Transverse colon (tissue), 4 donors: ENCODE measurements at regions of chr20 and their contacts with region 1.

Region 1: DNA sequence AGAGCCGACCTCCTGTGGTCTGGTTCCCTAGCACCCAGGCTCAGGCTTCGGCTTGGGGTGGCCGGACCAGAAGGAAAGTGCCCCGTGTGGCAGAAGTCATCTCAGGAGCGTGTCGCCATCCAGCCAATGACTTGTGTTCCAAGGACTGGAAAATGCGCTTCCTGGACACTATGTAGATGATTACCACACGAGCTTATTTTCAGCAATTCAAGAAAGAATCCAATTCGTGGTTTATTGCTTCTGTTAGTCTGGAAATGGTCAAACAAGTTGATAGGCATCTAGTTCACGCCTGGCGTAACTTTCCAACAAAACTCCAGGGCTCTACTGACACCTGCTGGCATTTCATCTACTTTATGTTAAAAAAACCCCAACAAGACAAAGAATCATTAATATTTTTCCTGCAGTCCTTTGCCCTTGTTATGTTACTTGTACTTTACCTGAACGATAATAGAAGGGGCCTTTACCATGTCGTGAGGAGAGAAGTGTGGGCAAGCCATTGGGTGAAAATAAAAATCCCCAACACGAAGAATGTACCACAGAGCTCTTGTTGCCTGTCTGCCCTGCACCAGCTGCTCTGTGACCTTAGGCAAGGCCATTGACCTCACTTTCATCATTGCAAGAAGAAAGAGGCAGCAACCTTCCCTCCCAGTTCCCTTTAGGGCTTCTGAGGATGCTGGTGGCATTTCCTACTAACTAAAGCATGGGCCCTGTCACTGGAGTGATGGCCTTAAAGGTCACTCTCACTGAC is 154.7 kb upstream of the LAMP5 start:
- DNase-seq: peak; percentile 55
- H3K4me3 ChIP-seq: no peak overlapping the region
- H3K27ac ChIP-seq: peak overlapping the region; percentile 29 to 48 (median 37)
- H3K4me1 ChIP-seq: peaks cover 0 to 12% (median 10%) of the 10 kb centered on the region in 4 donors
- H3K27me3 ChIP-seq: no peaks in the 10 kb centered on the region
- CTCF ChIP-seq: peak; percentile 44 to 68 (median 54)
- EP300 ChIP-seq: no peak
- POLR2A ChIP-seq: no peak

Region 2: DNA sequence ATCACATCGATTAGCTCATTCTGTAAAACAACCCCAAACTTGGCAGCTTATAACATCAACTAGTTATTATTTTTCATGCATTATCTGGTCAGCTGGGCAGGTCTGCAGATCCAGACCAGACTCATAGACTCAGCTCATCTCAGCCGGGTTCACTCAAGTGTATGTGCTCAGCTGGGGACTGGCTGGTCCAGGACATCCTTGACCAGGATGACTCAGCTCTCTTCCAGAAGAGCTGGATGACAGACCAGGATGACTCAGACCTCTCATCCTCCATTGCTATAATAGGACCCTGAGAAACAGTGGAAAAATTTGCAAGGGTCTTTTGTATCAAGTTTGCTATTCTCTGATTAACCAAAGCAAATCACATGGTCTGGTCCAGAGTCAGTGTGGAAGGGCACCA is 603.3 kb before region 1 on chr20:
- in situ Hi-C with region 1: loop called in 3 of 4 experiments (anchors 10 kb)
- intact Hi-C with region 1: no loop called
- DNase-seq: no peak
- H3K4me3 ChIP-seq: no peak overlapping the region
- H3K27ac ChIP-seq: peak overlapping the region in 2 of 4 donors; percentile 2 to 36
- H3K4me1 ChIP-seq: peaks cover 0 to 7% (median 0%) of the 10 kb centered on the region in 4 donors
- H3K27me3 ChIP-seq: no peaks in the 10 kb centered on the region
- CTCF ChIP-seq: no peak
- EP300 ChIP-seq: no peak
- POLR2A ChIP-seq: no peak

Region 3: DNA sequence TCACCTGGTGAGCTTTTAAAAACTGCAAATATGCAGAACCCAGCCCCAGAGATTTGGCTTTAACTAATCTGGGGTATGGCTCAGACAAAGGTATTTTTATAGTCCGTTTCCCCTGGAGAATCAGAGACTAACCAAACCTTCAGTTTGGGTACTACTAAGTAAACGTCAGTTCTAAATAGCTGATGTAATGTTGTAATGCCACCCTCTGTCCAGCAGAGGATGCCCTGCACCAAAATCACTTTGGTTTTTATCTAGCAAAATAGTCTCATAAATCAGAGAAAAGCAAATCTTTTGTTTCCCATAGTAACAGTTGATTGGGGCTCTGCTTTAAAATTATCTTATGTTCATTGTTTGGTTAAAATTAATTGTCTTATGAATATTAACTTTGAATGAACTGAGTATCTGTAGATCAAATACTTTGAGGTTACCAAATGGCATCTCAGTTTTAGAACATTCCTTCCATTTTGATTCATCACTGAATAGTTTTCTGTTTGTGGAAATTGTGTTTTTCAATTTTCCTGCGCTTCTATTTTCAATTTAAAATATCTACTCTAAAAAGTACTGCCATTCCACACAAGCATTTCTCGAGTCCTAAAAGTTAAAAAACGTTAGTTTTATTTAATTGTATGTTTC is 569.2 kb before region 1 on chr20:
- in situ Hi-C with region 1: loop called in 1 of 4 experiments (anchors 10 kb)
- intact Hi-C with region 1: loop called (anchors 10 kb)
- DNase-seq: peak; percentile 40
- H3K4me3 ChIP-seq: no peak overlapping the region
- H3K27ac ChIP-seq: peak overlapping the region in 2 of 4 donors; percentile 71
- H3K4me1 ChIP-seq: peaks cover 0 to 43% (median 9%) of the 10 kb centered on the region in 4 donors
- H3K27me3 ChIP-seq: no peaks in the 10 kb centered on the region
- CTCF ChIP-seq: peak; percentile 90 to 96 (median 93)
- EP300 ChIP-seq: no peak
- POLR2A ChIP-seq: no peak

Region 4: DNA sequence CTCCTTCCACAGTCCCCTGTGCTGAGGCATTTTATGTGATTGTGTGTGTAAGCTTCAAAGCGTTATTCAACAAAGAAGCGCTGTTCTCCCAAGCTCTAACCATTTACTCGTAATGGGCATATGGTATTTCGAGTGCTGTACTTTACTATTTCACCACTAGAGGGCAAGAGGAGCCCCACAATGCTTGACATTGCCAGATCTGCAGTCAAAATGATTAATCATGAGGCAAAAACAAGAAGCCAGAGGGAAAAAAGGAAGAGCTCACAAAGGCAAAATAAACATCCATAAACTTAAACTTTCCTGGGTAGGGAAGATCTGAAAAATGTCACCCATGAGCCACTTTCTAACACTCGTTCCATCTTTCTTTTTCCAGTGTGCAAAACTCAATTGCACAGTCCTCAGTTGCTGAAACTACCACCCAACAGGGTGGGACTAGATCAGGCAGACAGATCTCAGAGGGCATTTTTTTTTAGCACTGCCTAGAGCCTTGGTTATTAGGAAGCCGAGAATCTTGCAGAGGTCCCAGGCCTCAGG is 505.9 kb before region 1 on chr20:
- in situ Hi-C with region 1: loop called in 3 of 4 experiments (anchors 10 to 25 kb)
- intact Hi-C with region 1: loop called (anchors 10 kb)
- DNase-seq: no peak
- H3K4me3 ChIP-seq: no peak overlapping the region
- H3K27ac ChIP-seq: peak overlapping the region; percentile 32 to 64 (median 42)
- H3K4me1 ChIP-seq: peaks cover 0 to 13% (median 0%) of the 10 kb centered on the region in 4 donors
- H3K27me3 ChIP-seq: no peaks in the 10 kb centered on the region
- CTCF ChIP-seq: peak; percentile 81 to 89 (median 87)
- EP300 ChIP-seq: no peak
- POLR2A ChIP-seq: no peak